ENCODE measurements at regions of chr7 and their contacts with region 1.

Region 1: GRCh38 chr7:77759294-77759889 is 38.8 kb downstream of the TMEM60 start:
- DNase-seq: peak in 5 of 10 donors; percentile 42 to 80 (median 58)
- H3K4me3 ChIP-seq: peak overlapping the region in 27 of 59 donors; percentile 1 to 51 (median 23)
- H3K27ac ChIP-seq: peak overlapping the region in 31 of 59 donors; percentile 3 to 68 (median 28)
- H3K27me3 ChIP-seq: no peaks in the 10 kb centered on the region
- CTCF ChIP-seq: peak; percentile 70 to 97 (median 88)

Region 2: DNA sequence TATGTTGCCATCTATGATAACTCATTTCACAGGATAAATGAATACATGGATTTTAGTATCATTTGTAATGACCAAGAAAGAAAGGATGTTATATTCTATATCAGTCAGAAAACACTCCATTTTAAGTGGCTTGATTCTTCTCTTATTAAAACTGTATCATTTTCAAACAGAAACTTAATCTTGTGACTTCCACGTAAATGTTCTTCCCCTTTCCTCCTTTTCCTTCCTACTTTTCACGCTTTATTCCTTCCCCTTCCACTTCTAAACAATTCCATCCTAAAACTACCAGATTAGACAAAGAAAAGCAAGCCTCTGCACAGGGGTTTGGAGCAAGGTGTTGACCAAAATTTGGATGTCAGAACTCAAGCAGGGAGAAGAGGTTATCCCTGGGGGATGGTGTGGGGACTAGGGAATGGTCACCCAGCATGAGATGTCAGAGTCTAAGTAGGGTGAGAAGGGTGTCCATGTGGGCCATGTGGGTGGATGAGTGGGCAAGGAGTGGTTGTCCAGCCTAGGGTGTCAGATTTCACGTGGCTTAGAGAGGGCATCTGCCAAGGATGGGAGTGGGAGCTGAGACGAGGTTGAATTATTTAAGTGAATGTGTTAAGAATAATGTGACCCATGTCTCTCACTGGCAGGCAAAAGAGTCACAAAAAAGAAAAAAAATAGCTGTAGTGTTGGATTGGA is 338.3 kb before region 1 on chr7:
- intact Hi-C with region 1: no loop called
- DNase-seq: no peak
- H3K4me3 ChIP-seq: no peak overlapping the region
- H3K27ac ChIP-seq: peak overlapping the region in 2 of 59 donors; percentile 5 to 58
- H3K27me3 ChIP-seq: no peaks in the 10 kb centered on the region
- CTCF ChIP-seq: no peak

Region 3: GRCh38 chr7:77439572-77439971 is 319.8 kb before region 1 on chr7:
- intact Hi-C with region 1: loop called (anchors 2 to 10 kb)
- DNase-seq: peak in 9 of 10 donors; percentile 46 to 83 (median 60)
- H3K4me3 ChIP-seq: peak overlapping the region in 11 of 59 donors; percentile 9 to 42 (median 28)
- H3K27ac ChIP-seq: peak overlapping the region in 4 of 59 donors; percentile 18 to 39 (median 32)
- H3K27me3 ChIP-seq: no peaks in the 10 kb centered on the region
- CTCF ChIP-seq: peak in 55 of 56 donors; percentile 31 to 81 (median 58)

Region 4: GRCh38 chr7:77651573-77652162 is 107.7 kb before region 1 on chr7:
- intact Hi-C with region 1: loop called (anchors 2 to 5 kb)
- DNase-seq: peak in 1 of 10 donors; percentile 37
- H3K4me3 ChIP-seq: no peak overlapping the region
- H3K27ac ChIP-seq: peak overlapping the region in 2 of 59 donors; percentile 1 to 37
- H3K27me3 ChIP-seq: no peaks in the 10 kb centered on the region
- CTCF ChIP-seq: peak; percentile 66 to 95 (median 82)

Region 5: DNA sequence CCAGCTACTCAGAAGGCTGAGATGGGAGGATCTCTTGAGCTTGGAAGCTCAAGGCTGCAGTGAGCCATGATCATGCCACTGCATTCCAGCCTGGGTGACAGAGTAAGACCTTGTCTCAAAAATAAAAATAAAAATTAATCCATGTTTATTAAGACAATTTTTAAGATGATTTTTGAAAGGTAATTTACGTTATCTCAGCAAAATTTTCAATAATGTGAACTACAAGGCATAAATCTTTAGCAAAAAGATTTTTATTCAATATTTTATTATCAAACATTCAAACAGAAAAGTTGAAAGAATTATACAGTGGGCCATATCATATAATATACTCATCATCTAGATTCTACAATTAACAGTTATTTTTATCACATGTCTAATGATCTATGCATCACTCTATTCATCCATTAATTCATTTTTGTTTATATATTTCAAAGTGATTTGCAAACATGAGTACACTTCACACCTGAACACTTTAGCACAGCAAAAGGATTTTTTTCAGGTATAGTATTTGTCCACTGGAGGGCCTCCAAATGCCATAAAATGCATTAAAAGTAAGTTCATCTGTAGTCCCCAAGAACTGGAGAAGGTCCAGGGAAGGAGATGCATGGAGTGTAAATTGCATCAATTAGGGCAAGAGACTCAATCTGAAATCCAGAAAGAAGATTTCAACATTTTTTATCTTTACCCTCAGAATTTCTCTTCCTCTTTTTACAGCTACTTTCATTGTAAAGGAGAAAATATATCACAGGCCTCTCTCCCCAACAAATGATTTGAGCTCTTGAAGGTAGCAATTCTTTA is 101.8 kb before region 1 on chr7:
- intact Hi-C with region 1: loop called (anchors 2 to 5 kb)
- DNase-seq: peak in 1 of 10 donors; percentile 23
- H3K4me3 ChIP-seq: no peak overlapping the region
- H3K27ac ChIP-seq: no peak overlapping the region
- H3K27me3 ChIP-seq: no peaks in the 10 kb centered on the region
- CTCF ChIP-seq: peak; percentile 13 to 78 (median 54)

Region 6: DNA sequence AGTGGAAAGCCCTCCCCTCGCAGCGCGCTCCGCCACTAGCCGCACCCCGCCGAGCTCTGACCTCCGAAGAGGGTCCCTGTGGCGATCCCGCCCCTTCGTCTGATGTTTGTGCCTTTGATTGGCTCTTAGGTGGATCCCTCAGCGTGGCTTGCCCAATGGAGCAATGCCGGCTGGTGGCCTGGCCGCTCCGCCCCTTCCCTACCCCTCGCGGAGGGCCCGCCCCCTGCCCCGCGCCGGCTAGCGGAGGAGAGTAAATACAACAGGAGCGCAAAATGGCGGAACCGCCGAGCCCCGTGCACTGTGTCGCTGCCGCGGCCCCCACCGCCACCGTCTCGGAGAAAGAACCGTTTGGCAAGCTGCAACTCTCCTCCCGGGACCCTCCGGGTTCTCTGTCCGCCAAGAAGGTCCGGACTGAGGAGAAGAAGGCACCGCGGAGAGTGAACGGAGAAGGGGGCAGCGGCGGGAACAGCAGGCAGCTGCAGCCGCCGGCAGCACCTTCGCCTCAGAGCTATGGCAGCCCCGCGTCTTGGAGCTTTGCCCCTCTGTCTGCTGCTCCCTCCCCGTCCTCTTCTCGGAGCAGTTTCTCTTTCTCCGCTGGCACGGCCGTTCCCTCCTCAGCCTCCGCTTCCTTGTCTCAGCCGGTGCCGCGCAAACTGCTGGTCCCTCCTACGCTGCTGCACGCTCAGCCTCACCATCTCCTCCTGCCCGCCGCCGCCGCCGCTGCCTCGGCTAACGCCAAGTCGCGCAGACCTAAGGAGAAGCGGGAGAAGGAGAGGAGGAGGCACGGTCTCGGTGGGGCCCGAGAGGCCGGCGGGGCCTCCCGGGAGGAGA is 63.0 kb before region 1 on chr7 and contains the start of gene RSBN1L:
- intact Hi-C with region 1: loop called (anchors 2 to 10 kb)
- DNase-seq: peak; percentile 95 to 100 (median 99)
- H3K4me3 ChIP-seq: peak within 1 kb of the TSS; percentile 66 to 100 (median 96)
- H3K27ac ChIP-seq: peak within 1 kb of the TSS; percentile 89 to 100 (median 99)
- H3K27me3 ChIP-seq: no peaks in the 10 kb centered on the region
- CTCF ChIP-seq: peak in 41 of 56 donors; percentile 12 to 57 (median 38)
- total RNA-seq, gene RSBN1L: 17.4 to 37.5 (median 26.3) TPM

Measured in dorsolateral prefrontal cortex (tissue), 120 donors.